Activated naive CD4-positive, alpha-beta T cell treated with anti-CD3 and anti-CD28 coated beads for 36 hours (primary cell): ENCODE measurements at regions of chr6 and their contacts with region 1.

Region 1: GRCh38 chr6:109382576-109383437 is 540 bp upstream of the CD164 start:
- DNase-seq: peak; percentile 94
- H3K4me3 Mint-ChIP-seq: peak overlapping the region; percentile 96
- H3K27ac Mint-ChIP-seq: peak overlapping the region; percentile 100
- H3K4me1 Mint-ChIP-seq: peaks cover 35% of the 10 kb centered on the region
- H3K27me3 Mint-ChIP-seq: no peaks in the 10 kb centered on the region

Region 2: GRCh38 chr6:107716688-107717089 is 1666.1 kb before region 1 on chr6:
- CTCF ChIA-PET with region 1: no interaction called
- intact Hi-C with region 1: loop called (anchors 5 kb)
- DNase-seq: peak; percentile 89
- H3K4me3 Mint-ChIP-seq: peak overlapping the region; percentile 71
- H3K27ac Mint-ChIP-seq: peak overlapping the region; percentile 93
- H3K4me1 Mint-ChIP-seq: peaks cover 65% of the 10 kb centered on the region
- H3K27me3 Mint-ChIP-seq: no peaks in the 10 kb centered on the region

Region 3: GRCh38 chr6:108558372-108559096 is 824.3 kb before region 1 on chr6:
- CTCF ChIA-PET with region 1: no interaction called
- intact Hi-C with region 1: loop called (anchors 1 kb)
- DNase-seq: peak; percentile 97
- H3K4me3 Mint-ChIP-seq: peak overlapping the region; percentile 88
- H3K27ac Mint-ChIP-seq: peak overlapping the region; percentile 89
- H3K4me1 Mint-ChIP-seq: peaks cover 16% of the 10 kb centered on the region
- H3K27me3 Mint-ChIP-seq: peaks cover 10% of the 10 kb centered on the region

Region 4: DNA sequence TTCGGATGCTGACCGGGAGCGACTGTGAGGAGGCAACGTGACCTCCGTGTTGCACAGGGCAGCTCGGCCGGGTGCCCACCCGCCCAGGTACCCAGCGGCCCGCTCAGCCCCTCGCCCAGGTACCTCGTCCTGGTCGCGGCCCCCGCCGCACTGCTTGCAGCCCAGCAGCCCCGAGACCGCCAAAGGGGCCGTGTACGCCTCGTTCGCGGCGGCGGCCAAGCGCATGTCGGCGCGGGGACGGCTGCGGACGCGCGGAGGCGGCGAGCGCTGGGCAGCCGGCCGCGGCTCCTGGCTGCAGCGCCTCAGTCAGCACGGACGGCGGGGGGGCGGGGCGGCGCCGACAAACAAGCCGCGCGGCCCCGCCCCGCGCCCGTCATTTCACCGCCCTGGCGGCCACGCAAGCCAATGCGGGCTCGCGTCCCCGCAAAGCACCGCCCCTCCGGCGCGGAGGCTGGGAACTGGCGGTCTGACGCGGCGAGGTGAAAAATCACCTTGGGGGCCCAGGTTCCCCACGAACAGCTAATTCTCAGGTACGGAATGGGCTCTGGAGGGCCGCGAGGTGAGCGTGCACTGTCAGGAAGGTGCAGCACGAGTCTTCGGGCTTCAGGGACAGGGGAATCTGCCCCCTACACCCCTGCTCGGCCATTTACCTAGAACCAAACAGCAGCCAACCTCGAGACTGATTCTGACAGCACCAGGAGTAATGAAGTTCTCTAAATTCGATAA is 373.4 kb before region 1 on chr6:
- CTCF ChIA-PET with region 1: no interaction called
- intact Hi-C with region 1: loop called (anchors 1 kb)
- DNase-seq: peak; percentile 92
- H3K4me3 Mint-ChIP-seq: peak overlapping the region; percentile 95
- H3K27ac Mint-ChIP-seq: peak overlapping the region; percentile 96
- H3K4me1 Mint-ChIP-seq: peaks cover 60% of the 10 kb centered on the region
- H3K27me3 Mint-ChIP-seq: no peaks in the 10 kb centered on the region

Region 5: DNA sequence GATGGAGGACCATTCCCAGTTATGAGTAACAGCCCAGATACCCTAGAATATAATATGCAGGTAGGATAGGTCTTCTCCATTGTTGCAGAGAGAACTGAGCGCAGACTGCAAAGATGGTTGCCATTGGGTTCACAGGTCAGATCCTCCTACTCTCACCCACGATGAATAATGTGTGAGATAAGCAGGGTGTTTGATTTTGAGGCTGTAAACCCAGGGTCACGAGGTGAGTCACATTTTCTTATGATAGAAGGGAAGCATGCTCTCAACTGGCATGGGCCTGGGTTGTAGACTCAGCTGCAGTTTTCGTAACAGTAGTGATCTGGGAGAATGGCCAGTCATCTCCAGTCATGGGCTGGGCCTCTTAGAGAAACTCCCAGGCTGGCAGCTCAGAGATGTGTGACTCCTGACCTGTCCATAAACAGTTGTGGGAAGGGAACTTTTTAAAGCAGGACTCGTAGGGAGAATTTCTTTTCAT is 74.8 kb before region 1 on chr6:
- CTCF ChIA-PET with region 1: no interaction called
- intact Hi-C with region 1: loop called (anchors 2 kb)
- DNase-seq: peak; percentile 45
- H3K4me3 Mint-ChIP-seq: no peak overlapping the region
- H3K27ac Mint-ChIP-seq: no peak overlapping the region
- H3K4me1 Mint-ChIP-seq: peaks cover 13% of the 10 kb centered on the region
- H3K27me3 Mint-ChIP-seq: no peaks in the 10 kb centered on the region

Region 6: GRCh38 chr6:109690737-109691621 is 308.2 kb after region 1 on chr6 and contains the starts of genes AK9 and FIG4:
- CTCF ChIA-PET with region 1: interaction called, 3 read pairs
- intact Hi-C with region 1: loop called (anchors 1 kb)
- DNase-seq: peak; percentile 94
- H3K4me3 Mint-ChIP-seq: peak within 1 kb of the TSS; percentile 83
- H3K27ac Mint-ChIP-seq: peak within 1 kb of the TSS; percentile 81
- H3K4me1 Mint-ChIP-seq: peaks cover 26% of the 10 kb centered on the region
- H3K27me3 Mint-ChIP-seq: no peaks in the 10 kb centered on the region
- total RNA-seq, gene AK9: 1.7 TPM
- total RNA-seq, gene FIG4: 14.0 to 16.4 TPM

Region 7: GRCh38 chr6:110873981-110874879 is 1491.4 kb after region 1 on chr6 and contains the start of gene AMD1:
- CTCF ChIA-PET with region 1: no interaction called
- intact Hi-C with region 1: loop called (anchors 5 kb)
- DNase-seq: peak; percentile 94
- H3K4me3 Mint-ChIP-seq: peak within 1 kb of the TSS; percentile 95
- H3K27ac Mint-ChIP-seq: peak within 1 kb of the TSS; percentile 95
- H3K4me1 Mint-ChIP-seq: peaks cover 29% of the 10 kb centered on the region
- H3K27me3 Mint-ChIP-seq: no peaks in the 10 kb centered on the region
- total RNA-seq, gene AMD1: 72.6 to 75.3 TPM